ENCODE measurements at regions of chr1 and their contacts with region 1.

Region 1: DNA sequence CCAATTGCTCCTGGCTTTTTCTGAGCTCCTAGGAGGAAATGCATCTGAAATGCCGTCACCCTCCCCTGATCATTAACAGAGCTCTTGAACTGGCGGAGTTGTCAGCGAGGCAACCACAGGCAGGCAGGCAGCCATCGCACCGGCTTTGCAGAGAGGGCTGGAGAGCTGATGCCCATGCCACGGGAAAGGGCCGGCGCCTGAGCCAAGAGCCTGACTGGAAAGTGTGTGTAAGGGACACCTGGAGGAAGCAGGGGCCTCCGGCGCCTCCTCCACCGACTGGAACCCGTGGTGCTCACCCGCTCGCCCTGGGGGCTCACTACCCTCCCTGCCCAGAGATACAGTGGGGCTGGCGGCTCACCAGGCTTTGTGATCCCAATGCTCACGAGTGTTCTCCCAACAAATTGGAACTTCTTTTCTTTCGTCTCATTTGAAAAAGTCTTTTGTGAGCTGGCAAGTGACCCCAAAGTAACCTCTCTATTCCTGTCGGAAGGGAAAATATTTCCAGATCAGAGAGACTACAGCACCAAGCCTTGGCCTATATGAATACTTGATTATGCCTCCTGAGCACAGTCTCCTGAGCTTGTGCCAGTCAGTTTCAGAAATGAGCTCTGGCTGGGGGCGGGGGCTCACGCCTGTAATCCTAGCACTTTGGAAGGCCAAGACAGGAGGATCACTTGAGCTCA is 97.7 kb upstream of the SLC25A33 start:
- DNase-seq: peak in 2 of 3 donors; percentile 80
- ATAC-seq: peak; percentile 27 to 34
- H3K4me3 ChIP-seq: no peak overlapping the region
- H3K27ac ChIP-seq: peak overlapping the region; percentile 87
- H3K4me1 ChIP-seq: peaks cover 6% of the 10 kb centered on the region
- H3K27me3 ChIP-seq: no peaks in the 10 kb centered on the region

Region 2: DNA sequence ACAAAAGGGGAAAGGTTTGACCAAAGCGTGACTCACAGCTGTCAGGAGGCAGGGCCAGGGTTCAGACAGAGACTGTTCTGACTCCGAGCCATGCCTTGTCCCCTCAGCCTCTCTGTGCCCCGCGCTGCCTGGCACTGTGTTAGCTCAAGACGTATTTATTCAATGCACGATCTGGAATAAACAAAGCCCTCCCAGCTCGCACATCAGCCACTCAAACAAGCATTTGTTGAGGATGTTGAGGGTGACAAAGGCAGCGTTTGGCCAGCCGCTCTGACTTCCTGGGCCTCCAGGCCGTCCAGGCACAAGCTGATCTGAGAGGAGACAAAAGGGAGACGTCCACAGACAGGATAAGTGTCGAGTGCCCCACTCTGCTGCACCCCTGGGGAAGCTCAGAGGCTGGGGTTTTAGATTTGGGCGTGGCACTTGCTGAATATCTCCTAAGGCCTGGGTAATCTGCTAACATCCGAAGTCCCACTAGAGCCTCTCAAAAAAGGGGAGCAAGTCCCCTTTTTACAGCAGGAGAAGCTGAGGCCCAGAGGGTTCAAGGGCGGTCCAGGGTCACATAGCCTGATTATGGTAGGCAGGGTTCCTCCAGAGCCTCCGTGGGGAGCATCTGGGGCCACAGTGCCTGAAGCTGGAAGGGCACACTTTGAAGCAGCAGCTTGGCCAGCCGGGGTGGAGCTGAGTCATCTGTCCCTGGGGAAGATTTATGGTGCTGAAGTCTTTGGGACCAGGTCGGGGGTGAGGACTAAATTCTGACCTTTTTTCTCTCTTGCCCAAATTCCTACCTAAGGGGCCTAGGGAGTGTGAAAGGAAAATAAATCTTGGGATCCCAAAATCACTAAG is 53.0 kb before region 1 on chr1:
- intact Hi-C with region 1: loop called in 1 of 4 experiments (anchors 5 kb)
- DNase-seq: peak in 1 of 3 donors; percentile 53
- ATAC-seq: peak in 1 of 2 donors; percentile 20
- H3K4me3 ChIP-seq: no peak overlapping the region
- H3K27ac ChIP-seq: peak overlapping the region; percentile 30
- H3K4me1 ChIP-seq: peaks cover 8% of the 10 kb centered on the region
- H3K27me3 ChIP-seq: no peaks in the 10 kb centered on the region